Activated B cell treated with CpG ODN at 0.5 μM for 24 hours (primary cell): ENCODE measurements at regions of chr1 and their contacts with region 1.

Region 1: GRCh38 chr1:220149742-220150141 is 55.8 kb downstream of the IARS2 start:
- DNase-seq: no peak
- ATAC-seq: peak; percentile 50
- H3K4me3 Mint-ChIP-seq: no peak overlapping the region
- H3K27ac Mint-ChIP-seq: peak overlapping the region; percentile 53
- H3K4me1 Mint-ChIP-seq: peaks cover 7% of the 10 kb centered on the region
- H3K27me3 Mint-ChIP-seq: no peaks in the 10 kb centered on the region
- CTCF ChIP-seq: no peak

Region 2: DNA sequence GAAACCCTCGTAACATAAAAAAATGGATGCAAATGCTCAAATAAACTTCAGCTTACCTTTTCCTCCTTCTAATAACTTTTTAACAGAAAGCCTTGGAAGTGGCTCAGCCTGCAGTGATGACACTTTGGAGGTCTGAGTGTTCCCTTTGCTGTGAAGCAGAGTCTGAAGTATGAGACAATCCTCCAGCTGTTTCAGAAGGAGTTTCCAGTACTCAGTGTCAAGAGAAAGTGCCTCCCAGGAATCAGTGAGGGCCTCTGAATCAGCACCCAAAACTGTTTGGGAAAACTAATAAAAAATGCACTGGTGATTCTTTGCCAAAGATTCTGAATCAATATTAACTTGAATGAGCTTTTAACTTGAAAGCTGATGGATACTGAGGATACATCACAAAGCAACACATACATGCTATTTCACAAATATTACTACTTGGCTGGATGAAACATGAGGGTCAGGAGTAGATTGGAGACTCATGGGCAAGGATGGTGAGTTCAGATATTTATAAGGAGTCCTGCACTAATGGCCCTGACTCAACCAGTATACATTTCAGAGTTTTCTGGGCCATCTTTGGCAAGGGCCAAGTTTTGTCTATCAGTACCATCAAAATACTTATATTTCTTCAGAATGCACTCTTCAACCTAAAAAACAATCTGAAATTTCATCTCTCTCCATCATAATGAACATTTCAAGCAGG is 21.2 kb after region 1 on chr1:
- CTCF ChIA-PET with region 1: no interaction called
- POLR2A ChIA-PET with region 1: interaction called, 3 read pairs
- intact Hi-C with region 1: loop called (anchors 2 kb)
- DNase-seq: no peak
- ATAC-seq: no peak
- H3K4me3 Mint-ChIP-seq: no peak overlapping the region
- H3K27ac Mint-ChIP-seq: no peak overlapping the region
- H3K4me1 Mint-ChIP-seq: no peaks in the 10 kb centered on the region
- H3K27me3 Mint-ChIP-seq: no peaks in the 10 kb centered on the region
- CTCF ChIP-seq: no peak

Region 3: DNA sequence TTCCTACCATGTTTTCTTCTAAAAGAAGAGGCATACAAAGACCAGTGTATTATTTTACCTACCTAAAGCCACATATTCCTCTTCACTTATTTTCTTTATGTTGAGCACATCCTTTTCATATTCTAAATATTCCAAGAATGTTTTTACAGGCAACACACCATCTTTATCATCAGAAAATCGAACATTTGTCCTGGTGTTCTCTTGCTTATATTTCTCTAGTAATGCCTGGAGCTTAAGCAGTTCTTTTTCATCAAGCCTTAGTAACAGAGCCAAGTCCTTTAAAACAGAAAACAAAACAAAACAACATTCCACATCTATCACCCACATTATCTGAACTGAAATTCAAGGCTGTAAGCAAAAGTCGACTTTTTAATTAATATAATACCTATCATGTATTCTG is 32.9 kb after region 1 on chr1:
- CTCF ChIA-PET with region 1: no interaction called
- POLR2A ChIA-PET with region 1: no interaction called
- intact Hi-C with region 1: no loop called
- DNase-seq: no peak
- ATAC-seq: no peak
- H3K4me3 Mint-ChIP-seq: no peak overlapping the region
- H3K27ac Mint-ChIP-seq: no peak overlapping the region
- H3K4me1 Mint-ChIP-seq: no peaks in the 10 kb centered on the region
- H3K27me3 Mint-ChIP-seq: no peaks in the 10 kb centered on the region
- CTCF ChIP-seq: no peak

Region 4: GRCh38 chr1:220235462-220235861 is 85.7 kb after region 1 on chr1:
- CTCF ChIA-PET with region 1: no interaction called
- POLR2A ChIA-PET with region 1: no interaction called
- intact Hi-C with region 1: no loop called
- DNase-seq: no peak
- ATAC-seq: no peak
- H3K4me3 Mint-ChIP-seq: no peak overlapping the region
- H3K27ac Mint-ChIP-seq: no peak overlapping the region
- H3K4me1 Mint-ChIP-seq: peaks cover 20% of the 10 kb centered on the region
- H3K27me3 Mint-ChIP-seq: no peaks in the 10 kb centered on the region
- CTCF ChIP-seq: no peak

Region 5: GRCh38 chr1:220680085-220680687 is 530.4 kb after region 1 on chr1:
- CTCF ChIA-PET with region 1: no interaction called
- POLR2A ChIA-PET with region 1: no interaction called
- intact Hi-C with region 1: no loop called
- DNase-seq: no peak
- ATAC-seq: peak; percentile 83
- H3K4me3 Mint-ChIP-seq: no peak overlapping the region
- H3K27ac Mint-ChIP-seq: no peak overlapping the region
- H3K4me1 Mint-ChIP-seq: peaks cover 3% of the 10 kb centered on the region
- H3K27me3 Mint-ChIP-seq: no peaks in the 10 kb centered on the region
- CTCF ChIP-seq: no peak